Mucosa of descending colon (tissue), 3 donors: ENCODE measurements at regions of chr20 and their contacts with region 1.

Region 1: GRCh38 chr20:31723319-31724078 is 831 bp upstream of the BCL2L1 start:
- DNase-seq: peak; percentile 96 to 99 (median 98)
- ATAC-seq: peak; percentile 92
- H3K4me3 ChIP-seq: peak overlapping the region; percentile 67
- H3K4me1 ChIP-seq: peaks cover 29% of the 10 kb centered on the region
- CTCF ChIP-seq: peak; percentile 82

Region 2: GRCh38 chr20:31661625-31662371 is 61.7 kb before region 1 on chr20:
- intact Hi-C with region 1: loop called (anchors 2 kb)
- DNase-seq: peak; percentile 87 to 92 (median 89)
- ATAC-seq: peak; percentile 82
- H3K4me3 ChIP-seq: no peak overlapping the region
- H3K4me1 ChIP-seq: peaks cover 53% of the 10 kb centered on the region
- CTCF ChIP-seq: peak; percentile 68